OCI-LY7 (cell line): ENCODE measurements at regions of chr10 and their contacts with region 1.

Region 1: GRCh38 chr10:60208676-60209269 is 180.9 kb downstream of the ANK3 start:
- DNase-seq: peak; percentile 48
- H3K4me3 ChIP-seq: no peak overlapping the region
- H3K27ac ChIP-seq: no peak overlapping the region
- H3K4me1 ChIP-seq: peaks cover 22% of the 10 kb centered on the region
- CTCF ChIP-seq: peak; percentile 91

Region 2: GRCh38 chr10:59906417-59907202 is 302.2 kb before region 1 on chr10 and contains the start of gene CCDC6:
- CTCF ChIA-PET with region 1: no interaction called
- POLR2A ChIA-PET with region 1: interaction called, 9 read pairs
- intact Hi-C with region 1: loop called (anchors 10 kb)
- DNase-seq: peak; percentile 92
- H3K4me3 ChIP-seq: peak within 1 kb of the TSS; percentile 100
- H3K27ac ChIP-seq: peak within 1 kb of the TSS; percentile 77
- H3K4me1 ChIP-seq: peaks cover 39% of the 10 kb centered on the region
- CTCF ChIP-seq: peak; percentile 69
- total RNA-seq, gene CCDC6: 9.5 and 10.9 TPM in 2 replicates

Region 3: GRCh38 chr10:60099998-60100747 is 108.6 kb before region 1 on chr10:
- CTCF ChIA-PET with region 1: interaction called, 3 read pairs
- POLR2A ChIA-PET with region 1: interaction called, 6 read pairs
- intact Hi-C with region 1: loop called (anchors 1 kb)
- DNase-seq: peak; percentile 58
- H3K4me3 ChIP-seq: no peak overlapping the region
- H3K27ac ChIP-seq: no peak overlapping the region
- H3K4me1 ChIP-seq: no peaks in the 10 kb centered on the region
- CTCF ChIP-seq: peak; percentile 85

Region 4: GRCh38 chr10:60114765-60115586 is 93.8 kb before region 1 on chr10:
- CTCF ChIA-PET with region 1: no interaction called
- POLR2A ChIA-PET with region 1: interaction called, 3 read pairs
- intact Hi-C with region 1: loop called (anchors 1 kb)
- DNase-seq: peak; percentile 56
- H3K4me3 ChIP-seq: no peak overlapping the region
- H3K27ac ChIP-seq: no peak overlapping the region
- H3K4me1 ChIP-seq: peaks cover 3% of the 10 kb centered on the region
- CTCF ChIP-seq: peak; percentile 79

Region 5: DNA sequence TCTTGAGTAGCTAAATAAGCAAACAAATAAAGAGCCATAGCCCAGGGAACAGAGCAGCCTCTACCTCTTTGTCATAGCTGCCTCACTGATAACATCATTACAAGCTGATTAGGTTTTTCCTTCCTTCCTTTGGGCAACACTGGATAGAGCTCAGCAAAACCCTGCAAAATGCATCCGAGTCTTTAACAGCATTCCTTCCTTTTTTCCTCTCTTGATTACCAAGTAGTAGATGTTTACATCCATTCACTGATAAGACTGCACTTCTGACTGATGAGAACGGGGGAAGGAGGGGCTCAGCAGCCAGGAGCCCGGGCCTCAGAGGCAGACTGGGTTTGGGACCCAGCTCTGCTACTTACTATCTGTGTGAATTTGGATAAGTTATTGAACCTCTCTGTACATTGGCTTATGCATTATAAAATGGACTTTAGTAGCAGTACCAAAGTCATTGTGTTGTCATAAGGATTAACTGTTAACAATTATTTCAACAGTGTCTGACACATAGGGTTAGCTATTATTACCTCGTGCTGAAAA is 33.3 kb before region 1 on chr10:
- CTCF ChIA-PET with region 1: no interaction called
- POLR2A ChIA-PET with region 1: no interaction called
- intact Hi-C with region 1: no loop called
- DNase-seq: no peak
- H3K4me3 ChIP-seq: no peak overlapping the region
- H3K27ac ChIP-seq: no peak overlapping the region
- H3K4me1 ChIP-seq: no peaks in the 10 kb centered on the region
- CTCF ChIP-seq: no peak

Region 6: GRCh38 chr10:60224066-60224705 is 15.4 kb after region 1 on chr10:
- CTCF ChIA-PET with region 1: no interaction called
- POLR2A ChIA-PET with region 1: interaction called, 13 read pairs
- intact Hi-C with region 1: no loop called
- DNase-seq: no peak
- H3K4me3 ChIP-seq: no peak overlapping the region
- H3K27ac ChIP-seq: no peak overlapping the region
- H3K4me1 ChIP-seq: peaks cover 8% of the 10 kb centered on the region
- CTCF ChIP-seq: no peak

Region 7: GRCh38 chr10:60230892-60231291 is 22.1 kb after region 1 on chr10:
- CTCF ChIA-PET with region 1: interaction called, 4 read pairs
- POLR2A ChIA-PET with region 1: interaction called, 25 read pairs
- intact Hi-C with region 1: loop called (anchors 2 kb)
- DNase-seq: no peak
- H3K4me3 ChIP-seq: no peak overlapping the region
- H3K27ac ChIP-seq: no peak overlapping the region
- H3K4me1 ChIP-seq: peaks cover 73% of the 10 kb centered on the region
- CTCF ChIP-seq: no peak

Region 8: GRCh38 chr10:60434418-60435046 is 225.8 kb after region 1 on chr10:
- CTCF ChIA-PET with region 1: no interaction called
- POLR2A ChIA-PET with region 1: interaction called, 4 read pairs
- intact Hi-C with region 1: loop called (anchors 10 kb)
- DNase-seq: peak; percentile 49
- H3K4me3 ChIP-seq: no peak overlapping the region
- H3K27ac ChIP-seq: no peak overlapping the region
- H3K4me1 ChIP-seq: no peaks in the 10 kb centered on the region
- CTCF ChIP-seq: peak; percentile 90